ENCODE measurements at regions of chrX and their contacts with region 1.

Region 1: GRCh38 chrX:13646154-13646549 is 6.8 kb upstream of the TCEANC start:
- DNase-seq: peak; percentile 53
- H3K4me3 ChIP-seq: no peak overlapping the region
- H3K27ac ChIP-seq: no peak overlapping the region
- H3K4me1 ChIP-seq: no peaks in the 10 kb centered on the region
- H3K27me3 ChIP-seq: peaks cover 3% of the 10 kb centered on the region
- CTCF ChIP-seq: peak; percentile 81 to 94

Region 2: GRCh38 chrX:12814420-12814819 is 831.7 kb before region 1 on chrX:
- CTCF ChIA-PET with region 1: no interaction called
- dilution Hi-C with region 1: no loop called
- in situ Hi-C with region 1: no loop called
- intact Hi-C with region 1: loop called (anchors 5 kb)
- DNase-seq: peak; percentile 40
- H3K4me3 ChIP-seq: no peak overlapping the region
- H3K27ac ChIP-seq: no peak overlapping the region
- H3K4me1 ChIP-seq: peaks cover 8% of the 10 kb centered on the region
- H3K27me3 ChIP-seq: no peaks in the 10 kb centered on the region
- CTCF ChIP-seq: peak; percentile 49 to 69

Region 3: DNA sequence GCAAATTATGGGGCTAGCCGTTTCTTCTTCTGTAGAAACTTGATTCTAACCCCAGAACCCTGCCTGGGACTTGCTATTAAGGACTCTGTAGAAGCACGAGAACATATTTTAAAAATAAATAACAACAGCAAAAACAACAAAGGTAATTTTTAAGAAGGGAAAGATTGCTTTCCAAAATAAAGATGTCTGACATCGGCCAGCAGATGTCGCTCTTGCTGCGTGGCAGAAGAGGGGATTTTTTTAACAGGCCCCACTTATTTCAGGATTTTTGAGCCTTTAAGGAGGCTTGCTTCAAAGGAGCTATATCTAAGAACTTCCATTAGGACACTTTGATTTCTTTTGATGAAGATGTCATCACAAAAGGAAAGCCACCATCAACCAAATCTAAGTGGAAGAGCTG is 139.6 kb before region 1 on chrX:
- CTCF ChIA-PET with region 1: interaction called, 5 read pairs
- dilution Hi-C with region 1: loop called (anchors 10 kb)
- in situ Hi-C with region 1: loop called (anchors 5 kb)
- intact Hi-C with region 1: loop called (anchors 1 kb)
- DNase-seq: peak; percentile 18
- H3K4me3 ChIP-seq: no peak overlapping the region
- H3K27ac ChIP-seq: no peak overlapping the region
- H3K4me1 ChIP-seq: no peaks in the 10 kb centered on the region
- H3K27me3 ChIP-seq: no peaks in the 10 kb centered on the region
- CTCF ChIP-seq: peak; percentile 82 to 83

Region 4: GRCh38 chrX:13520936-13521335 is 125.2 kb before region 1 on chrX:
- CTCF ChIA-PET with region 1: interaction called, 6 read pairs
- dilution Hi-C with region 1: no loop called
- in situ Hi-C with region 1: no loop called
- intact Hi-C with region 1: loop called (anchors 1 kb)
- DNase-seq: no peak
- H3K4me3 ChIP-seq: no peak overlapping the region
- H3K27ac ChIP-seq: no peak overlapping the region
- H3K4me1 ChIP-seq: no peaks in the 10 kb centered on the region
- H3K27me3 ChIP-seq: no peaks in the 10 kb centered on the region
- CTCF ChIP-seq: no peak

Region 5: DNA sequence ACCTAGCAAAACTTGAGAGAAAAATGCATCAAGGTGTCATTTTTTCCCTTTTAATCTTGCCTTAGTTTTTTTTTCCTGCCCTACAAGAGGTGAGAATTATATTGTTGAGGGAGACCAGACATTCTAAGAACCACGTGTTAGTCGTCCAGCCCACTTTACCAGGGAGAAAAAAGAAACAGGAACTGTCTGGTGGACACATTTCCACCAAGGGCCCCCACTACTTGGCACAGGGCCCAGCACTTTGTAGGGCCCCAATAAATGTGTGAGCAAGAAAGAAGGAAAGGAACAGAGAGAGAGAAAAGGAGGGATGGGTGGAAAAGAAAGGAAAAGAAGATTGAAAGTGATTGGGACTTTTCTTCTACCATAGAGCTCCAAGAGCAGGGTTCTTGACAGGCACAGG is 80.6 kb before region 1 on chrX:
- CTCF ChIA-PET with region 1: no interaction called
- dilution Hi-C with region 1: no loop called
- in situ Hi-C with region 1: no loop called
- intact Hi-C with region 1: no loop called
- DNase-seq: no peak
- H3K4me3 ChIP-seq: no peak overlapping the region
- H3K27ac ChIP-seq: no peak overlapping the region
- H3K4me1 ChIP-seq: peaks cover 5% of the 10 kb centered on the region
- H3K27me3 ChIP-seq: peaks cover 17% of the 10 kb centered on the region
- CTCF ChIP-seq: no peak

Region 6: DNA sequence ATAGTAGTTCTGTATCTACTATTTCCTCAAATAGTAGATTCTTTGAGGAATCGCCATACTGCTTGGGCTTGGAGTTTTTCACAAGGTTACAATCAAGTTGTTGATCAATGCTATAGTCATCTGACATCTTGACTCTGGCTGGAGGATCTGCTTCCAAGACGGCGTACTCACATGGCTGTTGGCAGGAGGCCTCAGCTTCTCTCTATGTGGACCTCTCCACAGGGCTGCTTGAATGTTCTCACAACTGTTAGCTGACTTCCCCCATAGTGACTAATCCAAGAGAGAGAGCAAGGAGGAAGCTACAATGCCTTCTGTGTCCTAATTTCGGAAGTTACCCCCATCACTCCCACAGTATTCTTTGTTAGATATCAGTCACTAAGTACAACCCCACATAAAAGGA is 66.5 kb before region 1 on chrX:
- CTCF ChIA-PET with region 1: no interaction called
- dilution Hi-C with region 1: loop called (anchors 5 kb)
- in situ Hi-C with region 1: no loop called
- intact Hi-C with region 1: no loop called
- DNase-seq: no peak
- H3K4me3 ChIP-seq: no peak overlapping the region
- H3K27ac ChIP-seq: no peak overlapping the region
- H3K4me1 ChIP-seq: no peaks in the 10 kb centered on the region
- H3K27me3 ChIP-seq: peaks cover 11% of the 10 kb centered on the region
- CTCF ChIP-seq: no peak

Region 7: GRCh38 chrX:13627311-13627710 is 18.8 kb before region 1 on chrX:
- CTCF ChIA-PET with region 1: no interaction called
- dilution Hi-C with region 1: no loop called
- in situ Hi-C with region 1: no loop called
- intact Hi-C with region 1: no loop called
- DNase-seq: no peak
- H3K4me3 ChIP-seq: no peak overlapping the region
- H3K27ac ChIP-seq: no peak overlapping the region
- H3K4me1 ChIP-seq: no peaks in the 10 kb centered on the region
- H3K27me3 ChIP-seq: no peaks in the 10 kb centered on the region
- CTCF ChIP-seq: no peak

Measured in mammary epithelial cell (primary cell).